Left ventricle myocardium inferior (tissue), 1 donor: ENCODE measurements at regions of chr13 and their contacts with region 1.

Region 1: DNA sequence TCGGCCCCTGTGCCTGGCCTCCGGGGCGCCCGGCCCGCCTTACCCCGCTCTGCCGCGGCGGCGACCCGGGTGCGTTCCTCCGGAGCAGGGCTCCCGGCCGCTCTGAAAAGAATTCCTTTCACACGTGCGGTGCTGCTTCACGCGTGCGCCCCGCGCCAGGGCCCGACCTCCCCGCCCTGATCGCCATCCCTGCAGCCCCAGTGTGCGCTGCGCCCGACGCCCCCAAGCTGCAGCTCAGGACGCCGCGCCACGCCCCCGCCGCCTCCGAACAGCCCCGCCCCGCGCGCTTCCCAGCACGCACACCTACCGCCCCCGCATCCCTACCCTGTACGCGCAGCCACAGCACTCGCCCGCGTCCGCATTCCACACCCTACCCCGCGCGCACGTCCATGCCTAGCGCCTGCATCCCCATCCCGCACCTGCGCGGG is at the start of gene GJA3:
- DNase-seq: peak; percentile 64
- H3K4me3 ChIP-seq: peak within 1 kb of the TSS; percentile 74
- H3K27ac ChIP-seq: peak within 1 kb of the TSS; percentile 82
- H3K4me1 ChIP-seq: peaks cover 28% of the 10 kb centered on the region
- H3K27me3 ChIP-seq: peaks cover 95% of the 10 kb centered on the region
- CTCF ChIP-seq: peak; percentile 30
- total RNA-seq, gene GJA3: 17.6 TPM

Region 2: DNA sequence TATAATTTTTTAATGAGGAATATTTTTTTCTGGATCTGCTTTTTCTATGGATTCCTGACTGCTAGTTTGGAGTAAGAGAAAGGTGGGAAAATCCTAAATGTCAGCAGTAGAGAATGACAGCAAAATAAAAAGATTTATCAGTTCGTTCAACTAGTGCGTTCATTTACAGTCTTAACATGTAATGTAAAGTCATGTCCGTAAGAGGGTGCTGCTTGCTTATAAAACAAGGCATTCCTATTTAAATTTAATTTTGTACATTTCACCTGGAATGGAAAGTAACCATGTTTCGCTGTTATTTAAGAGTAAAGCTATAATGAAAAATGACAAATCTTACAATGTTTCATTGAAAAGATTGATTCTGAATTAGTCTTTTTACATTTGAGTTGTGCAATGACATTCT is 125.7 kb before region 1 on chr13:
- intact Hi-C with region 1: loop called (anchors 10 kb)
- DNase-seq: no peak
- H3K4me3 ChIP-seq: no peak overlapping the region
- H3K27ac ChIP-seq: no peak overlapping the region
- H3K4me1 ChIP-seq: peaks cover 12% of the 10 kb centered on the region
- H3K27me3 ChIP-seq: no peaks in the 10 kb centered on the region
- CTCF ChIP-seq: peak; percentile 45

Region 3: DNA sequence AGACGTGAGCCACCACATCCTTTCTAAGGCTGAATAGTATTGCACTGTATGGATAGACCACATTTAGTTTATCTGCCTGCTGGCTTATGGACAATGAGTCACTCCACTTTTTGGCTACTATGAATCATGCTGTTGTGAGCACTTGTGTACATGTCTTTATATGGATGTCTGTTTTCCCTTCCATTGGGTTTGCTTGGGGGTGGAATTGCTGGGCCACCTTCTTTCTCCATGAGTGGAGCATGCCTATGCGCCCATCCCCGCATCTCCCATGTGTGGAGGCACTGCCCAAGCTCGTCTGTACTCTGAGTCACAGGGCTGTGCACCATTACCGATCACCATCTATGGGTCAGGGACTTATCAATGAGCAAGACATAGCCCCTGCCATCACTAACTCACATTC is 198.5 kb after region 1 on chr13:
- intact Hi-C with region 1: no loop called
- DNase-seq: no peak
- H3K4me3 ChIP-seq: no peak overlapping the region
- H3K27ac ChIP-seq: no peak overlapping the region
- H3K4me1 ChIP-seq: no peaks in the 10 kb centered on the region
- H3K27me3 ChIP-seq: peaks cover 12% of the 10 kb centered on the region
- CTCF ChIP-seq: no peak